Activated naive CD4-positive, alpha-beta T cell treated with anti-CD3 and anti-CD28 coated beads, Interleukin-2, amount 10 ng/mL, durations not matched to agents 7 days and 5 days (primary cell): ENCODE measurements at regions of chr16 and their contacts with region 1.

Region 1: DNA sequence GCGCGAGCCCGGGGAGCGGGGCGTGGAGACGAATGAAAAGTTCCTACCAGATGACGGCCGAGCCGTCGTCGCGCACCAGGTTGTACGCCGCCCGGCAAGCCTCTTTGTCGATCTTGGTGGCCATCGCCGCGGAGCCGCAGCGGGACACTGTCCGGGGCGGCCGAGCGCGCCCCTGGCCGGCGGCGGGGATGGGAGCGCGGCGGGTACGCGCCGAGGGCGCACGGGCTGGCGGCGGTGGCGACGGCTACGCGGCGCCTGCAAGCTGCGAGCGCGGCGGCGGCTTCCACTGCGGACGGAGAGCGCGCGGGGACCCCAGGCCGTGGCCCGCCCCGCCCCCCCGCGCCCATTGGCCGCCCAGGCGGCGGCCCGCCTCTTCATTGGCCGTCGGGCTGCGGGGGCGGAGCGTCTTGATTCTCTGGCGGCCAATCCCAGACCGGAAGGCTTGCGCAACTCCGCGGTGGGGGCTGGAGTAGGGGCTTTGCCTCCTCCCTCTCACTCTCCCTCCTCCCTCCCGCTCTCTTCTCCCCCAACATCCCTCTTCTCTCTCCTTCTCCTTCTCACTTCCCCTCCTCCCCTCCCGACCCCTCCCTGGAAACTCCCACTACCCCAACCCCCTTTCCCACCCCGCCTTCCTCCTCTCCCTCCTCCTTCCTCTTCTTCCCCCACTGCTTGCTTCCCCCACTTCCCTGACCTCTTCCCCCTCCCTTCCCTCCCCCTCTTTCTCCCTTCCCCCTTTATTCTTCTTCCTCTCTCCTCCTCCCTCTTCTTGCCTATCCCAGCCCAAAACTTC is at the start of gene COTL1:
- DNase-seq: peak; percentile 96
- H3K4me3 Mint-ChIP-seq: peak within 1 kb of the TSS; percentile 96
- H3K27ac Mint-ChIP-seq: peak within 1 kb of the TSS; percentile 88
- H3K4me1 Mint-ChIP-seq: peaks cover 63% of the 10 kb centered on the region
- H3K27me3 Mint-ChIP-seq: peaks cover 31% of the 10 kb centered on the region

Region 2: GRCh38 chr16:84511180-84511824 is 106.7 kb before region 1 on chr16:
- CTCF ChIA-PET with region 1: interaction called, 100 read pairs
- DNase-seq: peak; percentile 80
- H3K4me3 Mint-ChIP-seq: no peak overlapping the region
- H3K27ac Mint-ChIP-seq: peak overlapping the region; percentile 87
- H3K4me1 Mint-ChIP-seq: peaks cover 92% of the 10 kb centered on the region
- H3K27me3 Mint-ChIP-seq: peaks cover 7% of the 10 kb centered on the region

Region 3: DNA sequence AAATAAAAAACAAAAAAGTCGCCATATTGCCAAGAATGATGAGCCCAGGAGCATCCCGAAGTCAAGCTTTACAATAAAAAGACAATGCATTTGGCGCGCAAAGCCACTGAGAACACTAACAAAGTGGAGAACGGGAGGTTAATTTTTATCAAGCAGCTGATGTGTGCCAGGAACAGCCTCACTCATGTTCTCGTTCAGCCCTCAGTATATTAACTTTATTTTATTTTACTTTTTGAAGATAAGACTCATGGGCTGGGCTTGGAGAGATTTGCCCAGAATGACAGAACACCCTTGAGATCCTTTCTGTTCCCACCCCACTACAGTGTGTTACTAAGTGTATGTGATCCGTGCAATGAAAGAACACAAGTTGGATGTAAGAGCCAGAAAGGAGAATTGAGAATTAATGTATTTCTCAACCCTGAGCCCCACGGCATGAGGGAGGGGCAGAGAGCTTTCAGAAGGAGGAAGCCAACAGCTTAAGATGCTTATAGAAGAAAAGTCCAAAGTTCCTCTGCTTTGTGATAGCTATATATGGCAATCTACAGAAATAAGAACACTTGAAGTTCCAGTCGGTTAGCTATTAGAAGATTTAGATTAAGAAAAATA is 48.5 kb before region 1 on chr16:
- CTCF ChIA-PET with region 1: no interaction called
- DNase-seq: no peak
- H3K4me3 Mint-ChIP-seq: no peak overlapping the region
- H3K27ac Mint-ChIP-seq: no peak overlapping the region
- H3K4me1 Mint-ChIP-seq: peaks cover 42% of the 10 kb centered on the region
- H3K27me3 Mint-ChIP-seq: no peaks in the 10 kb centered on the region

Region 4: DNA sequence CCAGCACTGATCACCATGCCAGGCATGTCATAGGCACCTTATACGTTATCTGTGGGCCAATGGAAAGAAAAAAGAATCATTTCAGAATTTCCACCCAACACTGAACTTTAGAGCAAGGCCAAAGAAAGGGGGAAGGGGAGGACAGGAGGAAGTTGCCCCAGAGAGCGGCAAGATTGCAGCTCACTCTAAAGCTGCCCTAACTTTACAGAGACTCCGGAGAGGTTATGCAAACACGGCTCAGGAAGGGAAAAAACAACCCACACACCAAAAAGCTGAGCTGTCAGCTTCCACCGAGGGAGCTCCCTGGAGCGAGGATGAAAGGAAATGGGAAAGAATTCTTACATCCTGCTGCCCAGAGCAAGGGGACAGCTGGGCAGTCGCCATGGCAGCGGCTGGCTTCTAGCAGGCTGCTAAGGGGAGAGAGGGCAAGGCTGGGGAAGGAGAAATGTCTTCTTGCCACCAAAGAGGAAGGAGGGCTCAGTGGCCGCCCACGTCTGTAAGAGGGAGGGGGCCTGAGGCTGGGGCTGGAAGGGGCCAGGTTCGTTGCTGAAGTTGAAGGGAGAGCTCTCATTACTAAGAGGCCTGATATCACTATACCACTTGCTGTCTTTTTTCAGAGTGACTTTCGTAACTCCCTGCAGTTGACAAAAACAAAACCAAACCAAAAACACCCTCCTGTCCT is 18.3 kb before region 1 on chr16:
- CTCF ChIA-PET with region 1: interaction called, 17 read pairs
- DNase-seq: peak; percentile 66
- H3K4me3 Mint-ChIP-seq: peak overlapping the region; percentile 72
- H3K27ac Mint-ChIP-seq: peak overlapping the region; percentile 97
- H3K4me1 Mint-ChIP-seq: peaks cover 93% of the 10 kb centered on the region
- H3K27me3 Mint-ChIP-seq: no peaks in the 10 kb centered on the region

Region 5: GRCh38 chr16:84672276-84673202 is 54.6 kb after region 1 on chr16:
- CTCF ChIA-PET with region 1: interaction called, 10 read pairs
- DNase-seq: peak; percentile 88
- H3K4me3 Mint-ChIP-seq: no peak overlapping the region
- H3K27ac Mint-ChIP-seq: no peak overlapping the region
- H3K4me1 Mint-ChIP-seq: peaks cover 7% of the 10 kb centered on the region
- H3K27me3 Mint-ChIP-seq: peaks cover 30% of the 10 kb centered on the region